GM13976 (cell line): ENCODE measurements at regions of chr11 and their contacts with region 1.

Region 1: GRCh38 chr11:6443269-6444003 is 2.6 kb upstream of the HPX start:
- DNase-seq: peak; percentile 73
- CTCF ChIP-seq: peak; percentile 87

Region 2: DNA sequence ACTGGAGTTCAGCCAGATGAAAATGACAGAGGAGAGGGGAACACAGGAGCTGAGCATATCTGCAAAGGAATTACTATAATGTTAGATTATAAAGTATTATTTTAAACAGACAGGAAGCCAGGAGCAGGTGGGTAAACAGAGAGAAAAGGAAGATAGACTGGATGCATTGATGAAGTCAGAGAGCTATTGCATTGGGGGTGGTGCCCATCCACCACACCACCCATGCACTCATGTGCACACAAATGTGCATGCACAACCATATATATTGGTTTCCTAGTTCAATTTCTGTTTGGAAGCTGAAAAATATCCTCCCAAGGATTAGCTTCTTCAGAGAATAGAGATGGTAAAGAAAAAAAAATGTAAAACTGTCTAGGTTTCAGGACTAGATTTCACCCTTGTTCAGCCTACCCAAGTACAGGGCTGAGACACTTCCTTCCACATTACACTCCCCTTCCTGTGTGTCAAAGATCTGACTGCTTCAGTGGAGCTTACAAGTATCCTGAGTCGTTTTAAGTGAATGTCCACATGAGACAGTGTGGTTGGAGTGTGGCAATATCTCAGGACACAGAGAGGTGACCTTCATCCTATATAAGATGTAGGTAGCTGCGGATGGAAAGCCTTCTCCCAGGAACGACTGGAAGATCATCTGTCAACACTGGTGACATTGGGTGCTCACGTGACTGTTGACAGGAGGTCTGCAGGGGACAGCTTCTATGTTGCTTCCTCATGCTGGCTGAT is 65.4 kb before region 1 on chr11:
- in situ Hi-C with region 1: loop called (anchors 5 kb)
- DNase-seq: no peak
- CTCF ChIP-seq: no peak